AG04450 (cell line): ENCODE measurements at regions of chr12 and their contacts with region 1.

Region 1: DNA sequence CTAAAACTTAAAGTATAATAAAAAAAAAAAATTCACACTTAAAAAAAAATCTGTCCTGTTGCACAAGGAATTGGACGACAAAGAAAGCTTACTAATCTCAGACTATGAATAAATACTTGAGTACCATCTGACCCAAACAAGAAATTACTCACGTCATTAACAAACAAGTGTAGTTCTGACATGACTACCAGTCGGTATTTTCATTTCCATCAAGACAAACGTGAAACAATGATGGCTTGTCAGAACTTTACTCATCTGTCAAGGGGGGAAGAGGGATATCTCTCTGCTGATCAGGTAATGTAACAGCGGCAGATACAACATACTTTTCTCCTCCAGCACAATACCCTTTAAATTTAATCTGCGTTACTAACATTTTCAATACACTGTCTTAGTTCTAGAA is 78.3 kb downstream of the CDK17 start:
- DNase-seq: no peak
- H3K4me3 ChIP-seq: no peak overlapping the region
- H3K27ac ChIP-seq: no peak overlapping the region
- H3K27me3 ChIP-seq: no peaks in the 10 kb centered on the region
- CTCF ChIP-seq: no peak

Region 2: GRCh38 chr12:96294831-96295230 is 27.1 kb before region 1 on chr12:
- CTCF ChIA-PET with region 1: interaction called, 12 read pairs
- POLR2A ChIA-PET with region 1: no interaction called
- DNase-seq: no peak
- H3K4me3 ChIP-seq: no peak overlapping the region
- H3K27ac ChIP-seq: no peak overlapping the region
- H3K27me3 ChIP-seq: no peaks in the 10 kb centered on the region
- CTCF ChIP-seq: no peak